Activated CD8-positive, alpha-beta memory T cell treated with anti-CD3 and anti-CD28 coated beads, Interleukin-2, amount 10 ng/mL, durations not matched to agents 7 days and 5 days (primary cell): ENCODE measurements at regions of chrX and their contacts with region 1.

Region 1: GRCh38 chrX:56726605-56727004 is 2.4 kb upstream of the NBDY start:
- DNase-seq: peak; percentile 41
- ATAC-seq: peak; percentile 64
- H3K4me3 Mint-ChIP-seq: no peak overlapping the region
- H3K27ac Mint-ChIP-seq: no peak overlapping the region
- H3K4me1 Mint-ChIP-seq: peaks cover 17% of the 10 kb centered on the region
- H3K27me3 Mint-ChIP-seq: no peaks in the 10 kb centered on the region

Region 2: DNA sequence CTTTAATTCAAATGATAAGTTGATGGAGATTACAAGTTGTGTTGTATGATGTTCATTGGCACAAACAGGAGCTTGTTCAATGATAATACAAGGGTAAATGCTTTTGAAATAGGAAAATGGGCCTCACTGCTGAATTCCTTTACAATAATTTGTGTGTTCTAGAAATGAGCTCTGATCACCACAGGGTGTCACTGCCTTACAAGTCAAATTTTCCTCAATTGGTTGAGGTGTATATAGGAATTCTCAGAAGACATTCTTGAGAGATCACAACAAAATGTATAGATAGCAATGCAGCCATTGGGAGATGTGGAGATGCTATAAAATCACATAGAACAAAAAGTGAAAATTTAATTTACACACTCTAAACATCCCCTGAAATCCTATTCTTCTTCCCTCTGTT is 444.8 kb before region 1 on chrX:
- CTCF ChIA-PET with region 1: interaction called, 17 read pairs
- DNase-seq: no peak
- ATAC-seq: no peak
- H3K4me3 Mint-ChIP-seq: no peak overlapping the region
- H3K27ac Mint-ChIP-seq: no peak overlapping the region
- H3K4me1 Mint-ChIP-seq: peaks cover 5% of the 10 kb centered on the region
- H3K27me3 Mint-ChIP-seq: no peaks in the 10 kb centered on the region

Region 3: DNA sequence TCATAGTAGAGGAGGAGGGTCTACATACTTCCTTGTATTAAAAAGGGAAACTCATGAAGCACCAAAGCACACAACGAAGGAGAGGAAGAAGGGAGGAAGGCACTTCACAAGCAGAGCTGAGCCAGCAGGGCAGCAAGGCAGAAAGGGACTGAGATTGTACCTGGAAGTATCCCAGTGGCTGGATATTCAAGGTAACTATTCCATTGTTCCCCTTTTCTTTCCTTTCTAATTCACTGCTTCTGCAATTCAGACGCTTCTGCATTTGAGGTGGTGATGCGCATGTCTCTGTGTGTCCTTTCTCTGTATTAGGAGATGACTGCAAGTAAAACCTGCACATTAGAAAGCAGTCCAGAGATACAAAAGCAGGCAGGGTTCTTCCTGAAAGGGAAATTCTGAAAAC is 108.3 kb before region 1 on chrX:
- CTCF ChIA-PET with region 1: no interaction called
- DNase-seq: no peak
- ATAC-seq: no peak
- H3K4me3 Mint-ChIP-seq: no peak overlapping the region
- H3K27ac Mint-ChIP-seq: no peak overlapping the region
- H3K4me1 Mint-ChIP-seq: no peaks in the 10 kb centered on the region
- H3K27me3 Mint-ChIP-seq: no peaks in the 10 kb centered on the region